ENCODE measurements at regions of chr14 and their contacts with region 1.

Region 1: GRCh38 chr14:52272375-52272774 is 4.9 kb downstream of the PTGDR start:
- DNase-seq: no peak
- H3K4me3 Mint-ChIP-seq: no peak overlapping the region
- H3K27ac Mint-ChIP-seq: no peak overlapping the region
- H3K4me1 Mint-ChIP-seq: peaks cover 45% of the 10 kb centered on the region
- H3K27me3 Mint-ChIP-seq: peaks cover 56% of the 10 kb centered on the region

Region 2: DNA sequence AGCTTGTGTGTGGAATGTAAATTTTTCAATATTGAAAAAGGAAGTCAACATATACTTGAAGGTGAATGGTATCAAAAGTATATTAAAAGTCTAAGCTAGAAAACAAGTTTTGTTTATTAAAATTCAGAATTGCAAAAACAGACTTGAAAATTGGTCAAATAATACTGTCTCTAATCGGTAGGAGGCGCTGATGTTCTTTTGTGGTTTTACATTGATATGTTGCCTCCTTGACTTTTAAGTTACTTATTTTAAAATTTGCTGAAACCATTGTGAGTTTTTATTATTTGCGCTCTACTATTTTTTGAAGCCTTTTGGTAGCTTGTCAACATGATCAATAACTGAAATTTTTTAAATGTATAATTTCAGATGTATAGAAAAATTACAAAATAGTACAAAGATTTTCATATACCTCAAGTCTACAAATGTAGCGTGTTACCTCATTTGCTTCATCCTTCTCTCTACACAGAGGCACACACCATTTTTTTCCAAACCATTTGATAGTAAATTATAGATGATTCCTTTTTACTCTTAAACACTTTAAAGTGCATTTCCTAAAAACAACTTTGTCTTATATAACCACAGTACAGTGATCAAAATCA is 276.1 kb before region 1 on chr14:
- intact Hi-C with region 1: loop called (anchors 5 kb)
- DNase-seq: no peak
- H3K4me3 Mint-ChIP-seq: no peak overlapping the region
- H3K27ac Mint-ChIP-seq: no peak overlapping the region
- H3K4me1 Mint-ChIP-seq: peaks cover 29% of the 10 kb centered on the region
- H3K27me3 Mint-ChIP-seq: no peaks in the 10 kb centered on the region

Region 3: DNA sequence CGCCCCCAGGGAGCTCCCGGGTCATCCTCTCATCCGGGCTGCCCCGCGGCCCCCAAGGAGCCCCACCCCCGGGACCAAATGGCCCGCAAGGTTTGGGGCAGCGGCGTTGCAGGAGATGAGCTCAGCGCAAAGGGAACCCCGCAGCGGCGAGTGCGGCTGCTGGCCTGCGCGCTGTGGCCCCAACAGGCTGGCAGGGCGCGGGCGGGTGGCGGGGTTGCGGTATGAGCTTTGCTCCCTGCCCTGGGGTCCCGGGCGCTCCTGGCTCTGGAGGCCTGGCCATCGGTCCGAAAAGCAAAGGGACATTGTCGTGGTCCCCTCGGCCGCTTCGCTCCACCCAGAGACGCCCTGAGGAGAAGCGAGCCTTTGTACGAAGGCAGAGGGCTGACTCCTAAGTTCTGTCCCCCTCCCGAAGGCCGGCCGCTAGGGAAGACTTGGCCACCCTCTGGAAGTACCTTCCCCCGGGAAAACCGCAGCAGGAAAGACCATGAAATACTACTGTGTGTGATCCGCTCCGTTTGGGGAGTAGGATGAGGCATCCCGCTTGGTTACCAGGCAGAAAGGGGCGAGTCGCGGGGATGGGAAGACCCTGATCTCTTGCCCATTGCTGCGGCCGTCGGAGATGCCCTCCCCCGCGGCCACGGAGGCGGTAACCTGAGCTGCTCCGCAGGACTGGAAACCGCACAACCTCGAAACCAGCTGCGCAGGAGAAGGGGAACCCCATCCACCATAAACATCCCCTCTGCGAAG is 202.9 kb before region 1 on chr14:
- intact Hi-C with region 1: loop called (anchors 10 kb)
- DNase-seq: peak; percentile 11
- H3K4me3 Mint-ChIP-seq: peak overlapping the region; percentile 57
- H3K27ac Mint-ChIP-seq: no peak overlapping the region
- H3K4me1 Mint-ChIP-seq: peaks cover 26% of the 10 kb centered on the region
- H3K27me3 Mint-ChIP-seq: peaks cover 62% of the 10 kb centered on the region

Region 4: DNA sequence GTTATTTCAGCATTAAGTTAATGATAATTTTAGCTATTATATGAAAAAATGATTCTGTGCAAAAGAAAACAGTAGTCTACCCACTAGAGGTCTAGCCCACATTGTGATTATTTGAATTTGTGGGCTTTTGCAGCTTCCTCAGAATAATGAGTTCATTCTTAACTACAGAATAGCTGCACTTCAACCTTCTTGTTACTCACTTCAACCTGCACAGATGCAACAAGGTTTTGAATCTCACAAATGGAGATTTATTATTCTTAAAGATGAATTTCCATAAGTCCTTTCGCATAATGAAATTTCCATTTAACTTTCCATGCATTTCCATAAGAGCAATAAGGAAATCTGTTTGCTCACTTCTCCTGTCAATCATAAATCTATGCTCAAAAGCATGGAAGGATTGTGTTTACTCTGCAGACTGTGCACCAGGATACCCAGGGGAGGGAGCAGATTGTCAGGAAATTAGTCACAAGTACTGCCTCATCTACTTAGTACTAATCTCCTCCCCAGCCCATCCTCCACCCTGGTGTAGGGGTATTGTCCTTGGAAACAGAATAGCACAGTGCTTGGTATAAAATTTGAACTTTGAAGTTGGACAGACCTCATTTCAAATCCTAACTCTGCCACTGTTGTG is 65.8 kb after region 1 on chr14:
- intact Hi-C with region 1: no loop called
- DNase-seq: no peak
- H3K4me3 Mint-ChIP-seq: no peak overlapping the region
- H3K27ac Mint-ChIP-seq: no peak overlapping the region
- H3K4me1 Mint-ChIP-seq: peaks cover 39% of the 10 kb centered on the region
- H3K27me3 Mint-ChIP-seq: no peaks in the 10 kb centered on the region

Measured in activated T-helper 2 cell treated with anti-CD3 and anti-CD28 coated beads, Interferon-gamma antibody, Interleukin-2, Interleukin-4, amounts not matched to agents 10 μg/mL and 5 μg/mL and 100 μg/mL, durations not matched to agents 14 hours and 24 hours and 36 hours (primary cell).